Posterior cingulate gyrus (tissue), 11 donors: ENCODE measurements at regions of chr16 and their contacts with region 1.

Region 1: GRCh38 chr16:22705799-22706198 is 108.2 kb upstream of the HS3ST2 start:
- DNase-seq: no peak

Region 2: DNA sequence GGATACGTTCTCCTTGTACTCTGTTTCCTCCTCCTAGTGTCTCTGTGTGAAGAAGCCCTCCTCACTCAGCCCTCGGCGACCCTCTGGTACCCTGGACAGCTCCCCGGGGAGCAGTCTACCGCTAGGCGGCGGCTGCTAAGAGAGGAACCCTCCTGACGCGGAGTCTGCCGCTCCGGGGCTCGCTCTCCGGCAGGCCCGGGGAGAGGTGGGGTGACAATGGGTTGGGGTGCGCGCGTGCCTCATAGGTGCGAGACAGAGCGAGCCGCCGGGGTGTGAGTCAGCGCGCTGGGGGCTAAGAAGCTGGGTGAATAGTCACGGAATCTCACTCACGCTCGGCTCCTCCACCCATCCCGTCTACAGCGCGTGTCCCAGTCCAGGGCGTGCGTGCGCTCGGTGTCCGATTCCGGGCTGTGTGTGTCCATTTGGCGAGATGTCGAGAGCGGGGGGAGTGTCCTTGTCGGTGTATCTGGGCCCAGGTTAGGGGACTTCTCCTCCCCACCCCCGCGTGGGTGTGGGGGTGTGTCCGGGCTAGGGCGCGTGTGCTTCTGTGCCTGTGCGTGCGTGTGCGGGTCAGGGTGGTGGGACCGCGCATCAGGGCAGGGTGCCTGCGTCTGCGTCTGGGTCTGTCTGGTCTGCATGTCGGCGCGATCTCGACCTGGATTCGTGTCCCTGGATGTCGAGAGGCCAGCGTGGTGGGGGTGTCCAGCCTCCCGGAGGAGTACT is 107.6 kb after region 1 on chr16:
- intact Hi-C with region 1: loop called (anchors 10 kb)
- DNase-seq: peak in 8 of 10 donors; percentile 31 to 91 (median 48)